IMR-90 (cell line): ENCODE measurements at regions of chr5 and their contacts with region 1.

Region 1: GRCh38 chr5:4614088-4614487 is 526.0 kb upstream of the ADAMTS16 start:
- DNase-seq: no peak
- ATAC-seq: no peak
- H3K4me3 ChIP-seq: no peak overlapping the region
- H3K27ac ChIP-seq: no peak overlapping the region
- H3K4me1 ChIP-seq: no peaks in the 10 kb centered on the region
- H3K27me3 ChIP-seq: no peaks in the 10 kb centered on the region
- CTCF ChIP-seq: no peak
- POLR2A ChIP-seq: no peak
- RAD21 ChIP-seq: no peak

Region 2: GRCh38 chr5:4424895-4425294 is 189.2 kb before region 1 on chr5:
- CTCF ChIA-PET with region 1: no interaction called
- POLR2A ChIA-PET with region 1: no interaction called
- dilution Hi-C with region 1: no loop called
- in situ Hi-C with region 1: no loop called
- intact Hi-C with region 1: no loop called
- DNase-seq: no peak
- ATAC-seq: no peak
- H3K4me3 ChIP-seq: no peak overlapping the region
- H3K27ac ChIP-seq: no peak overlapping the region
- H3K4me1 ChIP-seq: no peaks in the 10 kb centered on the region
- H3K27me3 ChIP-seq: no peaks in the 10 kb centered on the region
- CTCF ChIP-seq: no peak
- POLR2A ChIP-seq: no peak
- RAD21 ChIP-seq: no peak

Region 3: GRCh38 chr5:4640795-4641194 is 26.7 kb after region 1 on chr5:
- CTCF ChIA-PET with region 1: no interaction called
- POLR2A ChIA-PET with region 1: no interaction called
- dilution Hi-C with region 1: no loop called
- in situ Hi-C with region 1: no loop called
- intact Hi-C with region 1: no loop called
- DNase-seq: no peak
- ATAC-seq: no peak
- H3K4me3 ChIP-seq: no peak overlapping the region
- H3K27ac ChIP-seq: no peak overlapping the region
- H3K4me1 ChIP-seq: no peaks in the 10 kb centered on the region
- H3K27me3 ChIP-seq: no peaks in the 10 kb centered on the region
- CTCF ChIP-seq: no peak
- POLR2A ChIP-seq: no peak
- RAD21 ChIP-seq: no peak

Region 4: GRCh38 chr5:4651811-4652565 is 37.9 kb after region 1 on chr5:
- CTCF ChIA-PET with region 1: interaction called, 10 read pairs
- POLR2A ChIA-PET with region 1: no interaction called
- dilution Hi-C with region 1: no loop called
- in situ Hi-C with region 1: no loop called
- intact Hi-C with region 1: no loop called
- DNase-seq: no peak
- ATAC-seq: no peak
- H3K4me3 ChIP-seq: no peak overlapping the region
- H3K27ac ChIP-seq: no peak overlapping the region
- H3K4me1 ChIP-seq: no peaks in the 10 kb centered on the region
- H3K27me3 ChIP-seq: no peaks in the 10 kb centered on the region
- CTCF ChIP-seq: no peak
- POLR2A ChIP-seq: no peak
- RAD21 ChIP-seq: no peak